GM10248 (cell line): ENCODE measurements at regions of chr11 and their contacts with region 1.

Region 1: GRCh38 chr11:18408558-18409242 is 3.4 kb upstream of the LDHC start:
- DNase-seq: no peak
- CTCF ChIP-seq: no peak

Region 2: GRCh38 chr11:18368221-18368620 is 40.5 kb before region 1 on chr11:
- CTCF ChIA-PET with region 1: no interaction called
- POLR2A ChIA-PET with region 1: no interaction called
- DNase-seq: no peak
- CTCF ChIP-seq: no peak

Region 3: DNA sequence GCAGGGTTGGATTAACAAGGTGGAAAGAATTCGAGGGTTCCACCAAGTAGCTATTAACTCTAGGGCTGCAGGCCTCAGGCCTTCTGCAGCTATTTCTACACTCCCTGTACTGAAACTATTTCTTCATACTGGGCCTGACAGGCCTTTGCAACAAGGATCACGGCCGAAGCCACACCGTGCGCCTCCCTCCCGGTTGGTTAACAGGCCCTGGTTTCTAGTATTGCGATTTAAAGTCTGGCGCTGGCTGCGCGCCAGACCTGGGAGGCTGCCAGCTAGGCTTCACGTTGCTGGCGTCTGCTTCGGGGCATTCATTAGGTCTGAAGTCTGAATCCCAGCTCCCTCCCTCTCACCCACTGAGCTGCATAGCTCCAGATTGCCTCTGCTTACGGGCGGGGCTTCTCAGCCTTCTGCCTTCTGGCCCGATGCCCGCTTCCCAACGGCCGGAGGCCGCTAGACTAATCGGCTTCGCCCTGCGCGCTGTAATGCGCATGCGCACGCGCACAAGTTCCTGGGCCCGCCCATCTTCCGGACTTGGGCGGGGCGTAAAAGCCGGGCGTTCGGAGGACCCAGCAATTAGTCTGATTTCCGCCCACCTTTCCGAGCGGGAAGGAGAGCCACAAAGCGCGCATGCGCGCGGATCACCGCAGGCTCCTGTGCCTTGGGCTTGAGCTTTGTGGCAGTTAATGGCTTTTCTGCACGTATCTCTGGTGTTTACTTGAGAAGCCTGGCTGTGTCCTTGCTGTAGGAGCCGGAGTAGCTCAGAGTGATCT is 12.8 kb before region 1 on chr11:
- CTCF ChIA-PET with region 1: interaction called, 10 read pairs
- POLR2A ChIA-PET with region 1: interaction called, 8 read pairs
- DNase-seq: peak; percentile 96
- CTCF ChIP-seq: no peak

Region 4: GRCh38 chr11:18684267-18684666 is 275.6 kb after region 1 on chr11:
- CTCF ChIA-PET with region 1: no interaction called
- POLR2A ChIA-PET with region 1: no interaction called
- DNase-seq: no peak
- CTCF ChIP-seq: no peak

Region 5: GRCh38 chr11:18791207-18791968 is 382.7 kb after region 1 on chr11 and contains the start of gene PTPN5:
- CTCF ChIA-PET with region 1: no interaction called
- POLR2A ChIA-PET with region 1: no interaction called
- DNase-seq: no peak
- CTCF ChIP-seq: no peak